ENCODE measurements at regions of chr17 and their contacts with region 1.

Region 1: GRCh38 chr17:67993596-67994361 is 2.5 kb downstream of the C17orf58 start:
- DNase-seq: peak; percentile 90 to 92
- ATAC-seq: peak; percentile 81 to 89 (median 84)
- H3K4me3 ChIP-seq: peak overlapping the region; percentile 79
- H3K27ac ChIP-seq: peak overlapping the region; percentile 96
- H3K4me1 ChIP-seq: peaks cover 17% of the 10 kb centered on the region
- H3K27me3 ChIP-seq: no peaks in the 10 kb centered on the region
- CTCF ChIP-seq: no peak

Region 2: GRCh38 chr17:68019675-68020408 is 26.1 kb after region 1 on chr17:
- intact Hi-C with region 1: loop called in 1 of 2 experiments (anchors 1 kb)
- DNase-seq: peak; percentile 94 to 97
- ATAC-seq: peak; percentile 98 to 99 (median 98)
- H3K4me3 ChIP-seq: peak overlapping the region; percentile 83
- H3K27ac ChIP-seq: peak overlapping the region; percentile 84
- H3K4me1 ChIP-seq: peaks cover 6% of the 10 kb centered on the region
- H3K27me3 ChIP-seq: no peaks in the 10 kb centered on the region
- CTCF ChIP-seq: peak; percentile 51

Measured in psoas muscle (tissue), 8 donors.